Caco-2 (cell line): ENCODE measurements at regions of chr12 and their contacts with region 1.

Region 1: DNA sequence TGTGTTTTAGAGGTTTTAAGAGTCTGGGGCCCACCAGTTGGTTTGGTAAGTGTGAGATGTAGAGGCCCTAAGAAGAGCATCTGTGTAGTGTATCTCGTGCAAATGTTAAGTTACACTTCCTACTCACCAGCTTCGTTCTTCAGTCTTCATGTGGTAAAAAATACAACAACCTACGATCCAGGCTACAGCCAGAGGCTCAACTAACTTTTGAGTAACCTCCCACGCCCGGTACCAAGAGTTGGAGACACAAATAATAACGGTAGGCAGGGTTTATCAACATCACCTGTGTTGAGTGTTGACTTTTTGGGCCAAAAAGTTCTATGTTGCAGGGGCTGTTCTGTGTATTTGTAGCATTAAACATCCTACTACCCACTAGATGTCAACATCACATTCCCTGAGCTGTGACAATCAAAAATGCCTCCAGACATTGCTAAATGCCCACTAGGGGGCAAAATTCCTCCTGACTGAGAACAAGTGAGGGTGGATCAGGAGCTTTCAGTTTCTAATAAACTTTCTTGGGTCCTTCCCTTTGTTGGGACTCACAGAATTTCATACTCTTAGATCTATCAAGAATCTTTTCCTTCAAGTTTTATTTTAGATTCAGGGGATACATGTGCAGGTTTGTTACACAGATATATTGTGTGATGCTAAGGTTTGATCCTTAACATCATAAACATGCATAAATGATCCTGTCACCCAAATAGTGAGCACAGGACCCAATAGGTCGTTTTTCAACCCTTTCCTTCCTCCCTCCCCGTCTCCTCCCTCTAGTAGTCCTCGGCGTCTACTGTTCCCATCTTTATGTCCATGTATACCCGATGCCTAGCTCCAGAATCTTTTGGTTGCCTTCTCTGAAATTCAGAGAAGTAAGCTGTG is 94.7 kb downstream of the SLC2A13 start:
- DNase-seq: peak; percentile 66 to 77
- H3K4me3 ChIP-seq: no peak overlapping the region
- H3K4me3 Mint-ChIP-seq: no peak overlapping the region
- H3K27ac Mint-ChIP-seq: no peak overlapping the region
- H3K4me1 ChIP-seq: no peaks in the 10 kb centered on the region
- H3K4me1 Mint-ChIP-seq: no peaks in the 10 kb centered on the region
- H3K27me3 ChIP-seq: no peaks in the 10 kb centered on the region
- H3K27me3 Mint-ChIP-seq: peaks cover 2% of the 10 kb centered on the region
- CTCF ChIP-seq: peak; percentile 76 to 91

Region 2: GRCh38 chr12:40312982-40313576 is 301.9 kb after region 1 on chr12:
- CTCF ChIA-PET with region 1: interaction called, 3 read pairs
- POLR2A ChIA-PET with region 1: no interaction called
- intact Hi-C with region 1: loop called (anchors 1 kb)
- DNase-seq: no peak
- H3K4me3 ChIP-seq: no peak overlapping the region
- H3K4me3 Mint-ChIP-seq: no peak overlapping the region
- H3K27ac Mint-ChIP-seq: no peak overlapping the region
- H3K4me1 ChIP-seq: no peaks in the 10 kb centered on the region
- H3K4me1 Mint-ChIP-seq: no peaks in the 10 kb centered on the region
- H3K27me3 ChIP-seq: no peaks in the 10 kb centered on the region
- H3K27me3 Mint-ChIP-seq: peaks cover 5% of the 10 kb centered on the region
- CTCF ChIP-seq: peak; percentile 32 to 34